CD14-positive monocyte (primary cell): ENCODE measurements at regions of chr5 and their contacts with region 1.

Region 1: DNA sequence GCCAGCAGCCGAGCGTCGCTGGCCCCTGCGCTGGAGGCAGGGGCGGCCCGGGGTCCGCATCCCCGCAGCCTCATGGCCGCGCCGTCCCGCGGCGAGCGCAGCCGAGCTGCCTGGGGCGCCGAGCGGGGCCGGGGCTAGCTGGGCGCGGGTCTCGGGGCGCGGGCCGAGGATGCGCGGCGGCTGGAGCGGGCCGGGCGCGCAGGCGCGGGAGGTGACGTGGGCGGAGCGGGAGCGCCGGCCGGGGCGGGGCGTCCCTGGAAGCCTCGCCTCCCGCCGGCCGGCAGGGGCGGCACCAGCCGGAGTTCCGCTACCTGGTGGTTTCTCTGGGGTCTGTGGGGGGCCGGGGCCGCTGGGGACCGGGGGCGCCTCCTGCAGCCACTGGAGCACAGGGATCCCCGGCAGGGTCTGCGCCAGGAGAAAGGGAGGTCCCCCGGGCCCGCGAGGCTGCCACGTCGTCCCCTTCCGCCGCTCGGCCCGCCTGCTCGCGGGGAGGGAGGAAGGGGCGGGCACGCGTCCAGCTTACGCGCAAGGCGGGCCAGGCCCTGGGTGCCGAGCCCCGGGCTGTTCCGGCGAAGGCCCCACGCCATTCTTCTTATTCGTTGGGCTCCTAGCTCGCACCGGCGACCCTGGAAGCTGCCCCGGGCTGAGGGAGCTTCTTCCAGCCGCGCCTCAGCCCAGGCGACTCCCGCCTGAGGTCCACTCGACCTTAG is at the start of gene LPCAT1:
- DNase-seq: peak; percentile 71 to 79 (median 76)
- H3K4me3 ChIP-seq: peak within 1 kb of the TSS; percentile 43 to 86 (median 49)
- H3K4me3 Mint-ChIP-seq: peak within 1 kb of the TSS; percentile 93 to 95
- H3K27ac ChIP-seq: peak within 1 kb of the TSS; percentile 77 to 90
- H3K27ac Mint-ChIP-seq: peak within 1 kb of the TSS; percentile 28 to 89 (median 77)
- H3K4me1 ChIP-seq: peaks cover 23 to 26% of the 10 kb centered on the region in 2 donors
- H3K4me1 Mint-ChIP-seq: peaks cover 18% of the 10 kb centered on the region
- H3K27me3 ChIP-seq: no peaks in the 10 kb centered on the region
- H3K27me3 Mint-ChIP-seq: peaks cover 3 to 8% (median 8%) of the 10 kb centered on the region in 3 donors
- CTCF ChIP-seq: no peak
- polyA plus RNA-seq, gene LPCAT1: 34.1 to 53.9 (median 34.8) TPM

Region 2: DNA sequence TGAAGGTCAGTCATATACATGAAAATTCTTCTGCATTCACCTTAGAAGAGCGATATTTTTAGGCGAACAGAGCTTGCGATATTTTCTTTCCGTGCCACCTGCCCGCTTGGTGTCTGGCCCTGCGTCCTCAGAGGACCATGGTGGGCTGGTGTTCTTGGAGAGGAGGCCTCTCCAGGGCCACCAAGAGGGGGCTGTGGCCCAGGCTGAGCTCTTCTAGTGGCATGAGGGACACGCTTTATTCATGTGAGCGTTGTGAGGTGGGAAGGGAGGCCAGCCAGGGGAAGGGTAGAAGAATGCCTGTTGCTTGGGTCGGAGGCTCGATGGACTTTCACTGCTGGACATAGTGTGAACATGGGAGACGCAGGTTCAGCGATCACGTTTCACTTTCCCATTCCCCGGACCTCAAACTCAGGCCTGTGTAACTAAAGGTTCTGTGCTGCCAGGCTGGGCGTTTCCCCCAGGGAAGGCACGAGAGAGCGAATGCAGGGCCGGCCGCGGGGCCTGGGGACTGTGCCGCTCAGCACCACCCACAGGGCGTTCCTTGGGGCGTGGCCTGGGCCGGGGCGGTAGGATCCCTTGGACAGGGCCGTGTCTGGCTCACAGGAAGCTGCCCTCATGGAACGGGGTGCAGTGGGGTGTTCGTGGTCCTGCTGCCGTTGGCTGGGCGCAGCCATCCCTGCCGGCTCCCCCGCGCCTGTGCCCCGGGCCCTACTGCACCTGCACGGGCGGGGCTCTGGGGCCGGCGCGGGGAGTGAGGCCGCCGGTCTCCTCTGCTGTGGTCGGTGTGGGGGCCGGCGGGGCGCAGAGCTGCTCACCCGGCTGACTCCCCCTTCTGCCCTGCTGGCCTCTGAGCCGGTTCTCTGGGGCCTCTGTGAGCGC is 138.3 kb before region 1 on chr5:
- intact Hi-C with region 1: loop called in 1 of 2 experiments (anchors 10 kb)
- DNase-seq: peak; percentile 69 to 80 (median 73)
- H3K4me3 ChIP-seq: peak overlapping the region; percentile 44 to 78 (median 57)
- H3K4me3 Mint-ChIP-seq: peak overlapping the region; percentile 90 to 98
- H3K27ac ChIP-seq: peak overlapping the region; percentile 69 to 72
- H3K27ac Mint-ChIP-seq: peak overlapping the region; percentile 88 to 97 (median 94)
- H3K4me1 ChIP-seq: peaks cover 16 to 19% of the 10 kb centered on the region in 2 donors
- H3K4me1 Mint-ChIP-seq: peaks cover 22% of the 10 kb centered on the region
- H3K27me3 ChIP-seq: peaks cover 0 to 29% of the 10 kb centered on the region in 2 donors
- H3K27me3 Mint-ChIP-seq: peaks cover 37 to 48% (median 44%) of the 10 kb centered on the region in 3 donors
- CTCF ChIP-seq: no peak

Region 3: DNA sequence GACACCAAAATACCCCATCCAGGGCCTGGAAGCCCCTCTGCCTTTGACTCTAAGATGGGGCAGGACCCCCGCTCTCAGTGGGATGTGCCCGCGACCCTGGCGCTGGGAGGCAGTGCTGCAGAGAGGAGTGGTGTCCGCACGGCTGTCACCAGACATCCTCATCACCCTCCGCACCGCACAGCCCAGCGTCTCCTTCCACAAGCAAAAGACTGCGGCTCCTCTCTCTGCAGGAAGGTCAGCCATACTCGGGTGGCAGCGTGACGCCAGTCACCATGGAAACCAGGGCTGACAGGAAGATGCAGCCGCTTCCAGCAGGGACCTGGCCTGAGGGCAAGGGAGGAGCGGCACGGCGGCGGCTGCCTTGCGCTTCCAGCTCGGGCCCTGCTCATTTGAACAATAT is 61.6 kb before region 1 on chr5:
- intact Hi-C with region 1: no loop called
- DNase-seq: no peak
- H3K4me3 ChIP-seq: no peak overlapping the region
- H3K4me3 Mint-ChIP-seq: no peak overlapping the region
- H3K27ac ChIP-seq: no peak overlapping the region
- H3K27ac Mint-ChIP-seq: peak overlapping the region in 3 of 7 donors; percentile 34 to 73 (median 42)
- H3K4me1 ChIP-seq: no peaks in the 10 kb centered on the region
- H3K4me1 Mint-ChIP-seq: no peaks in the 10 kb centered on the region
- H3K27me3 ChIP-seq: no peaks in the 10 kb centered on the region
- H3K27me3 Mint-ChIP-seq: peaks cover 0 to 1% (median 0%) of the 10 kb centered on the region in 3 donors
- CTCF ChIP-seq: no peak

Region 4: GRCh38 chr5:1488943-1489680 is 34.8 kb before region 1 on chr5:
- intact Hi-C with region 1: no loop called
- DNase-seq: peak; percentile 76 to 90 (median 76)
- H3K4me3 ChIP-seq: no peak overlapping the region
- H3K4me3 Mint-ChIP-seq: no peak overlapping the region
- H3K27ac ChIP-seq: peak overlapping the region; percentile 1 to 82
- H3K27ac Mint-ChIP-seq: peak overlapping the region in 6 of 7 donors; percentile 5 to 96 (median 88)
- H3K4me1 ChIP-seq: peaks cover 33 to 44% of the 10 kb centered on the region in 2 donors
- H3K4me1 Mint-ChIP-seq: peaks cover 46% of the 10 kb centered on the region
- H3K27me3 ChIP-seq: no peaks in the 10 kb centered on the region
- H3K27me3 Mint-ChIP-seq: peaks cover 0 to 2% (median 0%) of the 10 kb centered on the region in 3 donors
- CTCF ChIP-seq: no peak

Region 5: GRCh38 chr5:1633605-1634336 is 109.8 kb after region 1 on chr5:
- intact Hi-C with region 1: loop called in 1 of 2 experiments (anchors 10 kb)
- DNase-seq: peak; percentile 16 to 71 (median 29)
- H3K4me3 ChIP-seq: peak overlapping the region; percentile 59 to 87 (median 59)
- H3K4me3 Mint-ChIP-seq: peak overlapping the region; percentile 88 to 97
- H3K27ac ChIP-seq: peak overlapping the region; percentile 17 to 26
- H3K27ac Mint-ChIP-seq: peak overlapping the region in 2 of 7 donors; percentile 85 to 93
- H3K4me1 ChIP-seq: peaks cover 5 to 6% of the 10 kb centered on the region in 2 donors
- H3K4me1 Mint-ChIP-seq: peaks cover 10% of the 10 kb centered on the region
- H3K27me3 ChIP-seq: peaks cover 8 to 18% of the 10 kb centered on the region in 2 donors
- H3K27me3 Mint-ChIP-seq: peaks cover 46 to 63% (median 48%) of the 10 kb centered on the region in 3 donors
- CTCF ChIP-seq: no peak